WTC11 (cell line): ENCODE measurements at regions of chr19 and their contacts with region 1.

Region 1: DNA sequence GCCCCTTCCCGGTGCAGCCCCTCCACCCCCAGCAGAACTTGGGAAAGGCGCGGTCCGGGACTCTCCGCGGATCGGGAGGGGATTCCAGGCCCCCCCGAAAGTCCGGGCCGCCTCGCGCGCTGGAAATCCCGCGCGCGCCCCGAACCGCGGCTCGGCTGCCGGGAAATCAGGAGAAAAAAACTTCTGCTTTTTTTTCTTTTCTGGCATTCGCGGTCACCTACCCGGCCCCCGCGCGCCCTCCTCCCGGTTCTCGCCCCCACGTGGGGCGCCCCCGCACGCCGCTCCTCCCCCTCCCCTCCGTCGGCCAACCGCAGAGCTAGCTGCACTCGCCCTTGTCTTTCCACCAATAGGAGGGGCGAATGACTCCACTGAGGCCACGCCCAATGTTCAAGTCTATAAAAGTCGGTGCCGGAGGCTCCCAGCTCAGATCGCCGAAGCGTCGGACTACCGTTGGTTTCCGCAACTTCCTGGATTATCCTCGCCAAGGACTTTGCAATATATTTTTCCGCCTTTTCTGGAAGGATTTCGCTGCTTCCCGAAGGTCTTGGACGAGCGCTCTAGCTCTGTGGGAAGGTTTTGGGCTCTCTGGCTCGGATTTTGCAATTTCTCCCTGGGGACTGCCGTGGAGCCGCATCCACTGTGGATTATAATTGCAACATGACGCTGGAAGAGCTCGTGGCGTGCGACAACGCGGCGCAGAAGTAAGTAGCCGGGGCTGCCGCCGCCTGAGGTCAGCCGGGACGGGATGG is at the start of gene GADD45B:
- DNase-seq: peak; percentile 95
- ATAC-seq: peak; percentile 51
- H3K4me3 Mint-ChIP-seq: peak within 1 kb of the TSS; percentile 93
- H3K27ac Mint-ChIP-seq: peak within 1 kb of the TSS; percentile 88
- H3K4me1 Mint-ChIP-seq: peaks cover 24% of the 10 kb centered on the region
- H3K27me3 Mint-ChIP-seq: peaks cover 47% of the 10 kb centered on the region
- CTCF ChIP-seq: no peak
- total RNA-seq, gene GADD45B: 17.9 to 27.5 TPM (median 23.2 TPM) in 3 replicates

Region 2: GRCh38 chr19:2461751-2462634 is 13.9 kb before region 1 on chr19:
- CTCF ChIA-PET with region 1: interaction called, 31 read pairs
- POLR2A ChIA-PET with region 1: interaction called, 59 read pairs
- DNase-seq: peak; percentile 78
- ATAC-seq: peak; percentile 61
- H3K4me3 Mint-ChIP-seq: peak overlapping the region; percentile 77
- H3K27ac Mint-ChIP-seq: no peak overlapping the region
- H3K4me1 Mint-ChIP-seq: peaks cover 9% of the 10 kb centered on the region; the same call in 1 of the 2 replicates
- H3K27me3 Mint-ChIP-seq: no peaks in the 10 kb centered on the region
- CTCF ChIP-seq: no peak

Region 3: DNA sequence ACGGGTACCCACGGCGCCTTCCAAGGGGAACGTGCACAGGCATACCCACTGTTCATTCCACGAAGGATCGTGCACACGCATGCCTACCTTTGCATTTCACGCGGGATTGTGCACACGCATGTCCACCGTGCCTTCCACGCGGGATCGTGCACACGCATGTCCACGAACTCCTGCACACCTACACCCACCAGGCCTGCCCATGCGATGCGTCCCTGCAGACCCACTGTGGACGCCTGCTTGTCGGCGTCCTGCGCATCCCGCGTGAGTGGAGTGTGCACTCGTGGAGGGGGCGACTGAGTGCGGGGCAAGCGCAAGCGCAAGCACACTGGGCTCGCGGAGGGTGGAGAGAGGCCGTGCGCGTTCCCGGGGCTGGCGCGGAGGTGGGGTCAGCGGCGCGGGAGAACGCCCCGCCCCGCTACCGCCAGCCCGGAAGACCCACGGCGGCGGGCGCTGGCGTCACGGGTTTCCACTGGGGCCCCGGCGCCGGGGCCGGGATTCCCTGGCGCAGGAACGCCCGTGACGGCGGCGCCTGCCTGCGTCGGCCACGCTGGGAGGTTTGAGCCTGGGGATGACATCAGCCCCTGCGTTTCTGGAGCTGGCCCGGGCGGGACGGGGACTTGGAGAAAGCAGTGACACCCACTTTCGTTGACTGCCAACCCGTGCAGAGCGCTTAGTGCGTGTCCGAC is 18.7 kb after region 1 on chr19:
- CTCF ChIA-PET with region 1: interaction called, 6 read pairs
- POLR2A ChIA-PET with region 1: interaction called, 14 read pairs
- DNase-seq: no peak
- ATAC-seq: peak; percentile 47
- H3K4me3 Mint-ChIP-seq: peak overlapping the region; percentile 66
- H3K27ac Mint-ChIP-seq: no peak overlapping the region
- H3K4me1 Mint-ChIP-seq: peaks cover 18% of the 10 kb centered on the region
- H3K27me3 Mint-ChIP-seq: peaks cover 47% of the 10 kb centered on the region
- CTCF ChIP-seq: no peak

Region 4: GRCh38 chr19:2543463-2544442 is 67.9 kb after region 1 on chr19:
- CTCF ChIA-PET with region 1: interaction called, 50 read pairs
- POLR2A ChIA-PET with region 1: interaction called, 83 read pairs
- DNase-seq: peak; percentile 91
- ATAC-seq: peak; percentile 67
- H3K4me3 Mint-ChIP-seq: peak overlapping the region; percentile 34; the same call in 1 of the 2 replicates
- H3K27ac Mint-ChIP-seq: peak overlapping the region; percentile 97
- H3K4me1 Mint-ChIP-seq: peaks cover 41% of the 10 kb centered on the region
- H3K27me3 Mint-ChIP-seq: peaks cover 3% of the 10 kb centered on the region; the same call in 1 of the 2 replicates
- CTCF ChIP-seq: no peak

Region 5: GRCh38 chr19:2636897-2637683 is 161.2 kb after region 1 on chr19:
- CTCF ChIA-PET with region 1: interaction called, 11 read pairs
- POLR2A ChIA-PET with region 1: interaction called, 9 read pairs
- DNase-seq: peak; percentile 76
- ATAC-seq: peak; percentile 70
- H3K4me3 Mint-ChIP-seq: peak overlapping the region; percentile 63
- H3K27ac Mint-ChIP-seq: no peak overlapping the region
- H3K4me1 Mint-ChIP-seq: peaks cover 17% of the 10 kb centered on the region
- H3K27me3 Mint-ChIP-seq: no peaks in the 10 kb centered on the region; the same call in 1 of the 2 replicates
- CTCF ChIP-seq: peak; percentile 83; the same call in 1 of the 2 replicates